ENCODE measurements at regions of chr19 and their contacts with region 1.

Region 1: DNA sequence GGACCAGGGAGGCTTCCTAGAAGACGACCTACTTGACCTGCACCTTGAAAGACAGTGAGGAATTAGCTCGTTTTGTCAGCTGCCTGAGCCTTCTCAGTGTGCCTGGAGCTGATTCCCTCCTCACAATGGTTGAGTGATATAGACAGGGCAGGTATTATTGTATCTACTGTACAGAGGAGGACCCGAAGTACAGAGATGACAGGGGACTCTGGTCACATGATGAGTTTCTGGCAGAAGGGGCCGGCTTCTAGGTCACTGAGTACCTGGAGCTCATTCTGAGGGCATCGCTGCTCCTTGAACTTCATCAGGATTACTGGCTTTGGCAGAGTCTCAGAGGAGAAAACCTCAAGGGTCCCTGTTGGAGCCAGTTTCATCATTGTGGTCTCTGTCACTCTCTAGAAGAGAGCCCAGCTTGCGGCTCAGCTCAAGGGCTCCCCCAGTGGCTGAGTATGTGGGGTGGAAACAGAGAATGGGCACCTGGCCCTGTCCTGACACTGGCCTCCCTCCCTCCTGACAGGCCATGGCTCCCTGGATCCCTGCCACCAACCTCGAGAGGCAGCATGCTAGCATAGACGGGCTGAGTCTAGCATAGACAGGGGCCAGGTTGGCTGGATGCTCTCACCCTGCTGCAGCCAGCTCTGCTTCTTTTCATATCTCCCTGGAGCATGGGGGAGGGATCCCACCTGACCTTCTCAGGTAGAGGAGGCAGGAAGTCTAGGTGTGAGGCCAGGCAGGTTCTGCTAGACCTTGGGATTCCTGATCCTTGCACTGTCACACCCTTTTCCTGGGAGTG is 38.7 kb downstream of the NFIX start:
- DNase-seq: peak; percentile 85
- ATAC-seq: peak; percentile 91
- H3K4me3 Mint-ChIP-seq: no peak overlapping the region
- H3K27ac Mint-ChIP-seq: no peak overlapping the region
- H3K4me1 Mint-ChIP-seq: peaks cover 8% of the 10 kb centered on the region
- H3K27me3 Mint-ChIP-seq: peaks cover 81% of the 10 kb centered on the region
- CTCF ChIP-seq: peak; percentile 53

Region 2: GRCh38 chr19:12938234-12939025 is 95.6 kb before region 1 on chr19 and contains the start of gene CALR:
- CTCF ChIA-PET with region 1: no interaction called
- POLR2A ChIA-PET with region 1: no interaction called
- DNase-seq: peak; percentile 99
- ATAC-seq: peak; percentile 90
- H3K4me3 Mint-ChIP-seq: peak within 1 kb of the TSS; percentile 99
- H3K27ac Mint-ChIP-seq: peak within 1 kb of the TSS; percentile 91
- H3K4me1 Mint-ChIP-seq: peaks cover 35% of the 10 kb centered on the region
- H3K27me3 Mint-ChIP-seq: no peaks in the 10 kb centered on the region
- CTCF ChIP-seq: no peak
- total RNA-seq, gene CALR: 977 to 1,088 TPM (median 978 TPM) in 3 replicates

Region 3: GRCh38 chr19:13007292-13008045 is 26.5 kb before region 1 on chr19:
- CTCF ChIA-PET with region 1: interaction called, 36 read pairs
- POLR2A ChIA-PET with region 1: no interaction called
- DNase-seq: no peak
- ATAC-seq: no peak
- H3K4me3 Mint-ChIP-seq: no peak overlapping the region
- H3K27ac Mint-ChIP-seq: no peak overlapping the region
- H3K4me1 Mint-ChIP-seq: peaks cover 15% of the 10 kb centered on the region
- H3K27me3 Mint-ChIP-seq: peaks cover 96% of the 10 kb centered on the region
- CTCF ChIP-seq: no peak

Region 4: DNA sequence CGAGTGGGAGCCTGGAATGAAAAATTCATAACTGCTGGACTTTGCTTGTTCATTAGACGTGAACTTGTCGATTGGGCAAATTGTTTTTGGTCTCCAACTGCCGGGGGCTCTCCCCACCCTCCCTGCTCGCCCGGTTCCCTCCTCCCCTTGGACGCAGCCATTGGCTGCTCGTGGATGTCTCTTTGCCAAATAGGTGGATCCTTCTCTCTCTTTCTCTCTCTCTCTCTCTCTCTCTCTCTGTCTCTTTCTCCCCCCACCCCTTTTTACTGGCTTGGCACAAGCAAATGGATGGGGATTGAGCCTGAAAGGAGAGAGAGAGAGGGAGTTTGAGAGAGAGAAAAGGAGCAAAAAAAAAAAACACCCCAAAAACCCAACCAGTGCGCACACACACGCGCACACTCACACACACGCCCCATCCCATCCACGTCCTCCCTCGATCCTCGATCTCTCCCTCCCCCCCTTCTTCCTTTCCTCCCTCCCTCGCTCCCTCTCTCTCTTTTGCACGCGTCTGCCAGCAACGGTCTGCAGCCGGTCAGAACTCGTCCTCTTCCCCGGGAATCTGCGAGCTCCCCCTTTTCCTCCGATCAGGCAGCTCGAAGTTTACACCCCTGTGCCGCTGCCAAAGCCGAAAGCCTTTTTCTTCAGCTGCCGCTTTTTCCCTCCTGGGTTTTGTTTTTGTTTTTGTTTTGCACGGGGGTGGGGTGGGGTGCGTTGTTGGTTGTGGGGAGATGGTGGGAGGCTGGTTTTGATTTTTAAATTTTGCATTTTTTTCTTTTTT is 11.0 kb before region 1 on chr19:
- CTCF ChIA-PET with region 1: interaction called, 17 read pairs
- POLR2A ChIA-PET with region 1: no interaction called
- DNase-seq: peak; percentile 61
- ATAC-seq: 0 out of 2 replicates have a peak, but pooled peaks have one; percentile 6
- H3K4me3 Mint-ChIP-seq: peak overlapping the region; percentile 57
- H3K27ac Mint-ChIP-seq: no peak overlapping the region
- H3K4me1 Mint-ChIP-seq: peaks cover 71% of the 10 kb centered on the region
- H3K27me3 Mint-ChIP-seq: peaks cover 100% of the 10 kb centered on the region
- CTCF ChIP-seq: no peak

Region 5: DNA sequence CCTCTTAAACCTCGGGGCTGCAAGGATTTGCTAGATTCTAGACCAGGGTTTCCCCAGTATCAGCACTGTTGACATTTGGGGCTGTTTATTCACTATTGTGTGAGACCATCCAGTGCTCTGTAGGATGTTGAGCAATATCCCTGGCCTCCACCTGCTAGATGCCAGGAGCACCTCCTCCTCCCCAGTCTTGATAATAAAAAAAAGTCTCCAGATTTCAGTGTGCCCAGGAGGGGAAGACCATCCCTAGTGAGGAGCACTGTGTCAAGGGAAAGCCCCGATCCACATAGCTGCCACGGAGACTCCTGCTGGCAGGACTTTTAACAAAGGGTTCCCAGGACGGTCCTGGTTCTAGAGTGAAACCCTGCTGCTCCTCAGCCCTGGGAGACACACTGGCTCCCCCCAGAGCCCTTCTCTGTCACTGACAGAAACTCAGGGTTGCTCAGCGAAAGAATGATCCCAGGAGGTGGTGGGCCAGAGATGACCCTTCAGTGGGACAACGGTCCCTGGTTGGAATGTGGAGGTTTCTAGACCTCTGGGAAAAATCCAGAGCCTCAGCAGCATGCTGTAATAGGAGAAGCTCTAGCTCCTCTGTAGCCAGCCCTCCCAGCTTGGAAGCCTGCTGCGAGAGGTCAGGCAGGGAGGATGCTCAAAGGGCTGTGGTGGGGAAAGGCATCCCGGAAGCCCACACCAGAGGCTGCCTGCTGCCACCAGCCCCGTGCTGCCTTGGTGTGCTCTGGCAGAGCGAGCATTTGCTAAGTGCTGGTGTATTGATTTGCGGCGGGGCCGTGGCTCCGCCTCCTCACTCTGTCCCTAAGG is 48.4 kb after region 1 on chr19:
- CTCF ChIA-PET with region 1: interaction called, 12 read pairs
- POLR2A ChIA-PET with region 1: no interaction called
- DNase-seq: peak; percentile 60
- ATAC-seq: peak; percentile 67
- H3K4me3 Mint-ChIP-seq: peak overlapping the region; percentile 40; the same call in 1 of the 2 replicates
- H3K27ac Mint-ChIP-seq: no peak overlapping the region
- H3K4me1 Mint-ChIP-seq: peaks cover 37% of the 10 kb centered on the region
- H3K27me3 Mint-ChIP-seq: peaks cover 19% of the 10 kb centered on the region
- CTCF ChIP-seq: no peak